ENCODE measurements at regions of chr21 and their contacts with region 1.

Region 1: DNA sequence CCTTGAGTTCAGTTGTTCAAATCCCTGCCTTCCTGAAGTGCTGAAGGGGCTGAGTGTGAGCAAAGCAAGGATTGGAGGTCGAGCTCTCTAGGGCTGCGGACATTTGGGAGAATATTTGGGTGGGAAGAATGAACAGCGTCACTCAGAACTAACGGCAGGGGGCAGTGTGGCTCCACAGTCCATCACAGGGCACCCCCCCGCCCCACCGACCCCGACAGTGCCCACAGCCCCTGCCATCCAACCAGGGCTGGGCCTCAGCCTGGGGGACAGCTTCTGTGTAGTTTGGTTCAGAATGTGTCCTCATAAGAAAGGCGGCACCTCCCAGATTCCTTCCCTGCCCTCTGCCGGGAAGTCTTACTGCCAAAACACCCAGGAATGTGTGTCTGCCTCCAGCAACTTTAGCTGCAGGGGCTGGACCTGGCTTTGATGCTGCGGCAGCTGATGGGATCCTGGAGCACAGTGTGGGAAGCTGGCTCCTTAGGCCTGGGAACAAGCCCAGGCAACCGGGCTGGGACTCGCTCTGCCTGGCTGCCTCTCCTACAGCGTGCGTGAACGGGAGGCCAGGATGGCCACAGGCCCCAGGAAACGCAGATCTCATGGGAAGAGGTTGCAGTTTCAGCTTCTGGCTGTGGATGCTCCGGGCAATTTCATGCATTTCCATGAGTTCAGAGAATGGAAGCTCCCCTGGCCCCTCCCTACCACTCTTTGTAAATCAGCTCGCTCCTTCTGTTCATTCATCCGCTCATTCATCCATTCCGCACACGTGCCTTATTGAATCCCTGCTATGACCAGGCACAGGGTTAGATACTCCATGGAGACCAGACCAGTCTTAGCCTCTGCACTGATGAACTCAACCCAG is 104.9 kb upstream of the TMPRSS2 start:
- DNase-seq: peak; percentile 74 to 82
- H3K4me3 ChIP-seq: 0 out of 2 replicates have a peak overlapping the region, but pooled peaks have one; percentile 2
- H3K4me3 Mint-ChIP-seq: peak overlapping the region; percentile 60
- H3K27ac Mint-ChIP-seq: peak overlapping the region; percentile 63
- H3K4me1 ChIP-seq: peaks cover 30% of the 10 kb centered on the region
- H3K4me1 Mint-ChIP-seq: peaks cover 18% of the 10 kb centered on the region
- H3K27me3 ChIP-seq: no peaks in the 10 kb centered on the region
- H3K27me3 Mint-ChIP-seq: no peaks in the 10 kb centered on the region
- CTCF ChIP-seq: peak; percentile 73 to 90

Region 2: GRCh38 chr21:41283211-41283818 is 329.6 kb before region 1 on chr21:
- CTCF ChIA-PET with region 1: interaction called, 13 read pairs
- POLR2A ChIA-PET with region 1: no interaction called
- intact Hi-C with region 1: loop called (anchors 5 kb)
- DNase-seq: peak; percentile 61 to 74
- H3K4me3 ChIP-seq: no peak overlapping the region
- H3K4me3 Mint-ChIP-seq: no peak overlapping the region
- H3K27ac Mint-ChIP-seq: no peak overlapping the region
- H3K4me1 ChIP-seq: no peaks in the 10 kb centered on the region
- H3K4me1 Mint-ChIP-seq: no peaks in the 10 kb centered on the region
- H3K27me3 ChIP-seq: no peaks in the 10 kb centered on the region
- H3K27me3 Mint-ChIP-seq: peaks cover 4% of the 10 kb centered on the region
- CTCF ChIP-seq: peak; percentile 79 to 82

Region 3: DNA sequence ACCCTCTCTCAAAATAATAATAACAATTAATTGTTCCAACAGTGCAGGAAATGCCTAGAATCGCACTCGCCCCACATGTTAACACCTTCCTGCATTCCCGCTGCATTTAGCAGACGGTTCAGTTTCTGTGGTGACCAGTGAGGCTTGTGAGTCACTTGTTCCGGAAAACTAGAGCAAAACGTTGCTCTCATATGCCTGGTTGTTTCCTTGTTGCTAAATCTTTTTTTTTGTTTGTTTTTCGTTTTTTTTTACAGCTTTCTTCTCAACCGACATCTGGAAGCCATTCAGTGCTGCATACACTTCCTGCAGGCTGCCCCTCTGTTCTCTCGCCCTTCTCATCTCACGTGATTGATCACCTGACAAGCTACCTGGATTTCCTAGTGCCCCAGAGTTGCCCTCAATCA is 48.0 kb before region 1 on chr21:
- CTCF ChIA-PET with region 1: no interaction called
- POLR2A ChIA-PET with region 1: no interaction called
- intact Hi-C with region 1: no loop called
- DNase-seq: no peak
- H3K4me3 ChIP-seq: no peak overlapping the region
- H3K4me3 Mint-ChIP-seq: no peak overlapping the region
- H3K27ac Mint-ChIP-seq: no peak overlapping the region
- H3K4me1 ChIP-seq: no peaks in the 10 kb centered on the region
- H3K4me1 Mint-ChIP-seq: peaks cover 6% of the 10 kb centered on the region
- H3K27me3 ChIP-seq: no peaks in the 10 kb centered on the region
- H3K27me3 Mint-ChIP-seq: no peaks in the 10 kb centered on the region
- CTCF ChIP-seq: no peak

Region 4: DNA sequence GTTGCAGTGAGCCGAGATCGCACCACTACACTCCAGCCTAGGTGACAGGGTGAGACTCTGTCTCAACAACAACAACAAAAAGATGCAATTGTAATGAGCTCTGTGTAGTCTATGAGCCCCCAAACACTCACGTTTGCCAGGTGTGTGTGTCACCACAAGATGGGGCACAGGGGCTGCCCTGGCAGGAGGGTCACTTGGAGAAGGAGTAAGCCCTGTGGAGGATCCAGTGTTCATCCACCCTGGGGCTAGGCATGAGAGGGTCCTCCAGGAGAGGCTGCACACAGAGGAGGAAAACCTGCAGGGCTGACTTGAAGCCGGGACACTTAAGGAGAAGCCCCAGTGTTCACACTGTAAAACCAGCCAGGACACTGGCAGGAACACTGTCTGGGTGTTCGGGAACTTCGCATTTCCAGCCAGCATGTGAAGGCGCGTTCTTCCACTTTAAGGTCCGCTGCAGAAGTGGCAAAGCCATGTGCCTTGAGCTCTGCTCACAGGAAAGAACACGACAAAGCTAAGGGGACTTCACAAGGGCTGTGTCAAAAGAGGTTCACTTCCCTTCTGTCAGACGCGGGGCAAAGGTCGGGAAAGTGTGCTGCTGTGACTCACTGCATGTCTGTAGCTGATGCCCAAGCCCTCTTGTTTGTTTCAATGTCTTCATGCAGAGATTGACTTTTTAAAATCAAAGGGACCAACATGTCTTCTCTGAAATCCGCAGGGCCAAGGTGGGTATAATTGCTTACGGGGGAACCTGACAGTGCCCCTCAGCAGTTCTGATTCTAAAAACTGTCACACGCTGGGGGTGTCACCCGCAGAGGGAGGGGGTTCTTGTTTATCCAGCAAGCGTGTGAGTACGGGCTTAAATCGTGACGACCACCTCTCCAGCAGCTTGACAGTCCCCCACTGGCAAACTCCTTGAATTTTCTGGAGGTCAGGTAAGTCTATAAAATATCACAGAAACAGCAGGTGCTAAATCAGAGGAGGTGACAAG is 51.2 kb after region 1 on chr21:
- CTCF ChIA-PET with region 1: interaction called, 7 read pairs
- POLR2A ChIA-PET with region 1: no interaction called
- intact Hi-C with region 1: loop called (anchors 1 kb)
- DNase-seq: peak; percentile 68 to 80
- H3K4me3 ChIP-seq: no peak overlapping the region
- H3K4me3 Mint-ChIP-seq: peak overlapping the region; percentile 52
- H3K27ac Mint-ChIP-seq: peak overlapping the region; percentile 85
- H3K4me1 ChIP-seq: peaks cover 31% of the 10 kb centered on the region
- H3K4me1 Mint-ChIP-seq: peaks cover 28% of the 10 kb centered on the region
- H3K27me3 ChIP-seq: no peaks in the 10 kb centered on the region
- H3K27me3 Mint-ChIP-seq: no peaks in the 10 kb centered on the region
- CTCF ChIP-seq: no peak

Region 5: DNA sequence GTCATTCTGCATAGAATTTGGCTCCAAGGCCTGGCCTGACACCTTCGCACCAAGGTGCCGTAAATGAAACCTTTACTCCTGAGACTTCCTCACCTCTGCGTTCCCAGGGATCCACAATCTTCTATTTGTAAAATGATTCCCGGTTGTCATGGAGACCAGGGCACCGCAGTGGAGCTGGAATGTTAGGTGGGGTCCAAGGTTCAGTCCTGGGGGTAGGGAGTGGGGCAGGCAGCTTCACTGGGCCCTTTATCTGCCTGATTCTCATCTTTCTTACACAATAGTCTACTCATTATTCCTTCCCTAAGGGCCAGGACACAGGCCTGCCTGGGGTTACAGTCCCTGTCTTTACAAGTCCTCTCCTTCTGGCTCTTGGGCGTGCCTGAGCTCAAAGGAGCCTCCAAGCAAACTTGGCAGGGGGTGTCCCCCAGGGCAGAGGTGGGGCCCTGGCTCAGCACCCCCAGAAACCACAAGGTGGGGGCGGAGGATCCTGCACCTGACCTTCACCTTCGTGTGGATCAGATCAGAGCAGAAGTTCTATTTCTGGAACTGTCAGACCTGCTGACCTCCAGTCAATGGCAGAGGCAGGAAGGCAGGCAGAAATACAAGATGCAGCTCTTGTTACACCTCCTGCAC is 102.9 kb after region 1 on chr21:
- CTCF ChIA-PET with region 1: interaction called, 22 read pairs
- POLR2A ChIA-PET with region 1: interaction called, 3 read pairs
- intact Hi-C with region 1: loop called (anchors 1 kb)
- DNase-seq: peak; percentile 97 to 99
- H3K4me3 ChIP-seq: no peak overlapping the region
- H3K4me3 Mint-ChIP-seq: peak overlapping the region; percentile 88
- H3K27ac Mint-ChIP-seq: peak overlapping the region; percentile 88
- H3K4me1 ChIP-seq: peaks cover 65% of the 10 kb centered on the region
- H3K4me1 Mint-ChIP-seq: peaks cover 41% of the 10 kb centered on the region
- H3K27me3 ChIP-seq: no peaks in the 10 kb centered on the region
- H3K27me3 Mint-ChIP-seq: no peaks in the 10 kb centered on the region
- CTCF ChIP-seq: no peak

Region 6: DNA sequence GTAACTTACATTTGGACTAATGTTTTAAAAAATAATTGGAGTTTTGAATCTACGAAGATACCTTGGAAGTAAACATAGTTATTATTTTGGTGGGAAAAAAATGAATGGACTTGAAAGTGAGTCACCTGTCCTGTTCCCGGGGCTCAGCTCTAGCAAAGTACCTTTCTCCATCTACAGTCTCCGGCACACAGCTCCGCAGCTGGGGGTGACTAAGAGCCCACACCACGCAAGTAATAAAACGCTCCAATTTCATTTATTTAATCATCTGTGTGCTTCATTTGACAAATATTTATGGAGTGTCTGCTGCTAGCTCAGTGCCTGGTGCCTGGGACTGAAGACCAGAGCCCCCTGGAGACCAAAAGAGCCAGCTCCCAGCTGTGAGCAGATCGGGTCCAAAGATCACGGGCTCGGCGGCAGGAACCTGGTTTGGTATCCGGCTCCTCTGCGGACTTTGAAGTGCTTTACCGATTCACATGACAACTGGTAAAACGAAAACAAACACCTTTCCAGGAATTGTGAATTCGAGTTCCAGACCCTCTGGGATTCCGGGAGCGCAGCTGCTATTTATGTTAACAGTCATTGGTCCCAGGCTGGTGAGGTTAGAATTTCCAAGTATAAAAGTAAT is 155.6 kb after region 1 on chr21:
- CTCF ChIA-PET with region 1: interaction called, 61 read pairs
- POLR2A ChIA-PET with region 1: interaction called, 4 read pairs
- intact Hi-C with region 1: loop called (anchors 2 kb)
- DNase-seq: peak; percentile 91 to 93
- H3K4me3 ChIP-seq: peak overlapping the region; percentile 90
- H3K4me3 Mint-ChIP-seq: peak overlapping the region; percentile 90
- H3K27ac Mint-ChIP-seq: peak overlapping the region; percentile 94
- H3K4me1 ChIP-seq: peaks cover 40% of the 10 kb centered on the region
- H3K4me1 Mint-ChIP-seq: peaks cover 64% of the 10 kb centered on the region
- H3K27me3 ChIP-seq: no peaks in the 10 kb centered on the region
- H3K27me3 Mint-ChIP-seq: no peaks in the 10 kb centered on the region
- CTCF ChIP-seq: peak; percentile 41 to 68

Region 7: DNA sequence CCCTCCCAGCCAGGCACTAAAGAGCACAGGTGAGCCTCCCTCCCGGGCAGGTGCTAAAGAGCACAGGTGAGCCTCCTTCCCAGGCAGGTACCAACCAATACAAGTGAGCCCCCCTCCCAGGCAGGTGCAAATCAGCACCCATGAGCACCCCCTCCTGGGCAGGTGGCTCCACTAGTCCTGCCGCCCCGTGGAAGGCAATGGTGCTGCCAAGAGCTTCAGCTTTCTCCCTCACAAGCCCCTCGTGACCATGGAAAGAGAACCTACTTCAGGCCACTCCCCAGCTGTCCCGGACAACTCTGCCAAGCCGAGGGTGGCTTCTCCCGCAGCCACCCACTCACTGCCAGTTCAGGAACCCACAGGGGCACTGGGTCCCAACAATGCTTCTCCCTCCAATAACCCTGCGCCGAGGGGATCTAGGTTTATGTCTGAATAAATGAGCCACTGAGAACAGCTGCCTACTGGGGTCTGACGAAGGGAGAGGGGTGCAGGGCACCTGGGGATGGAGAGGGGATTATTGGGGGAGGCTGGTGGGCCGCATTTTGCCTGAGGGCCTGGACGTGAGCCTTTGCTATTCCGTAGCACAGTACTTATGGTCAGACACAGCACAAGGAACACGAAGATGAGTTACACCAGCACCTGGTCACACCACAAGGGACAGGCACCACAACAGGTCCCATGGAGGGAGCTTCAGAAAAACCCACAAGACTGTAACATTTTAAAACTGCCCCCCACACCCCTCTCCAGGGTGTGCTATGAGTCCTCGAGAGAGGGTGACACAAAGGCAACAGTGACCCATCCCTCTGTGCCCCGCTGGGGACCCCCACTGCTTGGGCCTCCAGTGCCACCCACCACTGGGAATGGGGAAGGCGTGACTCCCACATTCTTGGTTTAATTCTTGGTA is 219.9 kb after region 1 on chr21:
- CTCF ChIA-PET with region 1: no interaction called
- POLR2A ChIA-PET with region 1: no interaction called
- intact Hi-C with region 1: no loop called
- DNase-seq: no peak
- H3K4me3 ChIP-seq: no peak overlapping the region
- H3K4me3 Mint-ChIP-seq: no peak overlapping the region
- H3K27ac Mint-ChIP-seq: no peak overlapping the region
- H3K4me1 ChIP-seq: no peaks in the 10 kb centered on the region
- H3K4me1 Mint-ChIP-seq: peaks cover 6% of the 10 kb centered on the region
- H3K27me3 ChIP-seq: no peaks in the 10 kb centered on the region
- H3K27me3 Mint-ChIP-seq: no peaks in the 10 kb centered on the region
- CTCF ChIP-seq: peak in 1 of 2 experiments; percentile 1

Region 8: DNA sequence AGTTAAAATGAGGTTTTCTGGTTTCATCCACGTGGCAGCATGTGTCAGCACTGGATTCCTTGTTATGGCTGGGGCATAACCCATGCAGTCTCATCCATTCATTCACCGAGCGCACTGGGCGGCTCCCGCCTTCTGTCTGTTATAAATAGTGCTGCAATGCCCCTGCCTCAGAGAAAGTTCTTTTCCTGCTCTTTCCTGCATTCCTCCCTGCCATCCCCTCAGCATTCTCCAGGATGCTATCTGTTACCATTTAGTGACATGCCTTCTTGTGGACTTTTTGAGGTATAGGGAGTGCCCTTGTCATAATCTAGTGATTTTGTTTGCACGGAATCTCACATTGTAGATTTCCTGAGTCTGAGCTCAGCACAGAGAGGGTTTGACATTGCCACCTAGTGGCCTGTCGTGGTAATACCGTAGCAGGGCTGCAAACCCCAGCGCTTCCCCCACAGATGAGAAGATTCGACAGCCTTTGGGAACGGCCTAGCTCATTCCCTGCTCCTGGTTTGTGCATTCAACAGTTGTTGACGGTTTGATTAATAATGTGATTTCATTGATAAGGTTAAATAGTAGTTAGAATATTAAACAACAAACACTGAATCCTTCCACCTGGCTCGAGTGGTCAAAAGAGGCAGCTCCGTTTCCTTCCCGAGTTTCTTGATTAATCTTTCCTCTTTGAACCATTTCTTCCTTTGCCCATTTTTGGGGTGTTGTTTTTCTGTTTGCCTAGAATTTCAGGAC is 504.5 kb after region 1 on chr21:
- CTCF ChIA-PET with region 1: interaction called, 7 read pairs
- POLR2A ChIA-PET with region 1: no interaction called
- intact Hi-C with region 1: loop called (anchors 5 kb)
- DNase-seq: peak; percentile 66 to 79
- H3K4me3 ChIP-seq: no peak overlapping the region
- H3K4me3 Mint-ChIP-seq: no peak overlapping the region
- H3K27ac Mint-ChIP-seq: no peak overlapping the region
- H3K4me1 ChIP-seq: peaks cover 20% of the 10 kb centered on the region
- H3K4me1 Mint-ChIP-seq: peaks cover 20% of the 10 kb centered on the region
- H3K27me3 ChIP-seq: no peaks in the 10 kb centered on the region
- H3K27me3 Mint-ChIP-seq: no peaks in the 10 kb centered on the region
- CTCF ChIP-seq: peak; percentile 87 to 89

Measured in Caco-2 (cell line).